ENCODE measurements at regions of chr3 and their contacts with region 1.

Region 1: GRCh38 chr3:137105277-137105977 is 147.6 kb downstream of the IL20RB start:
- DNase-seq: no peak
- ATAC-seq: peak; percentile 72

Region 2: GRCh38 chr3:137946345-137946973 is 841.0 kb after region 1 on chr3:
- intact Hi-C with region 1: loop called (anchors 10 kb)
- DNase-seq: peak; percentile 60
- ATAC-seq: no peak

Region 3: DNA sequence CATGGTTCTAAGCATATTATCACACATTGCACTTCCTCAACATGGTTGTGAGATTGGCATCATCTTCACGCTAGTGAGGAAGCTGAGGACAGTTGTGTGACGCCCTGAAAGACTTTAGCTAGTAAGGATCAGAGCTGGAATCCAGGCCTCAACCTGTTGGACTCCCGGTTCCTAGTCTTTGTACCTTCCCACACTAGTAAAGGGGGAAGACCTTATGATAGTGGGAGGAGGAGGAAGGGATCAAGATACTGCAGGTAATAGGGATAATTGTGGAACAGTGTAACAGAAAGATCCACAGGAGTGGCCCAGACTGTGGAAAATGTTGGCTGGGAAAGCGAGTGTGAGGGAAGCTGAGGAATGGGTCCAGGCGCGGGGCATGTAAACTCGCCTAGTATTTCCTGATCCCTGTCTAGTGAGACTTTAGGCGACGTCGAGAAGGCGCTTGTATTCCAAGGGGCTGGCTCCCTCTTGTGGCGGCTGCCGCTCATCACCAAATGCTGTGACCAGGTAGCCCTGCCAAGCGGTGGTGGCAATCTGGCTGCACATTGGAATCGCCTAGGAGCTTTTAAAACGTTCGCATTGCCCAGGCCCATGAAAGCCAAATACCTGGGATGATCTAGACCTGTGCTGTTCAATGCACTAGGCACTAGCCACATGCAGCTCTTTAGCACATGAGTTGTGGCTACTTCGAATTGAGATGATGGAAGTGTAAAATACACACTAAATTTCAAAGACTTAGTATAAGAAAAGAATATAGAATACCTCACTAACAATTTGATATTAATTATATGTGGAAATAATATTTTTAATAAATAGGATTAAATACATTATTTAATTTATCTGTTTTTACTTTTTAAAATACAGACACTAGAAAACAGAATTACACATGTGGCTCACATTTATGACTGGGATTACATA is 865.7 kb after region 1 on chr3:
- intact Hi-C with region 1: loop called (anchors 5 kb)
- DNase-seq: peak; percentile 83
- ATAC-seq: peak; percentile 80

Region 4: GRCh38 chr3:138051946-138052802 is 946.7 kb after region 1 on chr3:
- intact Hi-C with region 1: loop called (anchors 5 kb)
- DNase-seq: no peak
- ATAC-seq: peak; percentile 57